Activated CD8-positive, alpha-beta T cell treated with anti-CD3 and anti-CD28 coated beads, Interleukin-2, amount 10 ng/mL, durations not matched to agents 7 days and 5 days (primary cell): ENCODE measurements at regions of chr22 and their contacts with region 1.

Region 1: GRCh38 chr22:17785185-17786184 is 11.2 kb upstream of the BID start:
- DNase-seq: peak; percentile 78
- ATAC-seq: peak; percentile 66
- H3K4me3 Mint-ChIP-seq: no peak overlapping the region
- H3K27ac Mint-ChIP-seq: no peak overlapping the region
- H3K4me1 Mint-ChIP-seq: peaks cover 17% of the 10 kb centered on the region
- H3K27me3 Mint-ChIP-seq: no peaks in the 10 kb centered on the region

Region 2: GRCh38 chr22:17734187-17734586 is 51.3 kb before region 1 on chr22:
- CTCF ChIA-PET with region 1: interaction called, 106 read pairs
- POLR2A ChIA-PET with region 1: no interaction called
- DNase-seq: peak; percentile 56
- ATAC-seq: peak; percentile 75
- H3K4me3 Mint-ChIP-seq: no peak overlapping the region
- H3K27ac Mint-ChIP-seq: peak overlapping the region; percentile 69
- H3K4me1 Mint-ChIP-seq: peaks cover 16% of the 10 kb centered on the region
- H3K27me3 Mint-ChIP-seq: no peaks in the 10 kb centered on the region

Region 3: DNA sequence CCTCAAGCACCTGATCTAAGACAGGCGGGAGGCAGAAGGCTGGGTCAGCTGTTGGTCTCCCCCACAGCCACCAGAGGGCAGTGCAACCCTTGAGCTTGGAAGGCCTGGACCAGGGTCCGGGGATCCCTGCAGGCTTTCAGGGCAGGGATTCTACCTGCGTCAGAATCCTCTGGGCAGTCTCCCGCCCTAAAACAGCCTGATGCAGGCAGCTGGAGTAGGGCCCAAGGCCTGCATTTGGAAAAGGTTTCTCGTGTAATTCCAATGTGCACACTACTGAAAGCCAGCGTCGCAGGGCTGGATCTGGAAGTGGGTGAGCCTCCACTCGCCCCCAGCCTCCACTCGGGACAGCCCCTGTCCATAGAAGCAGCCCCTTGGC is 43.0 kb before region 1 on chr22:
- CTCF ChIA-PET with region 1: interaction called, 106 read pairs
- POLR2A ChIA-PET with region 1: interaction called, 6 read pairs
- DNase-seq: peak; percentile 73
- ATAC-seq: peak; percentile 75
- H3K4me3 Mint-ChIP-seq: no peak overlapping the region
- H3K27ac Mint-ChIP-seq: no peak overlapping the region
- H3K4me1 Mint-ChIP-seq: no peaks in the 10 kb centered on the region
- H3K27me3 Mint-ChIP-seq: no peaks in the 10 kb centered on the region

Region 4: GRCh38 chr22:17754233-17754925 is 31.1 kb before region 1 on chr22:
- CTCF ChIA-PET with region 1: interaction called, 15 read pairs
- POLR2A ChIA-PET with region 1: no interaction called
- DNase-seq: no peak
- ATAC-seq: peak; percentile 51
- H3K4me3 Mint-ChIP-seq: no peak overlapping the region
- H3K27ac Mint-ChIP-seq: no peak overlapping the region
- H3K4me1 Mint-ChIP-seq: no peaks in the 10 kb centered on the region
- H3K27me3 Mint-ChIP-seq: no peaks in the 10 kb centered on the region

Region 5: DNA sequence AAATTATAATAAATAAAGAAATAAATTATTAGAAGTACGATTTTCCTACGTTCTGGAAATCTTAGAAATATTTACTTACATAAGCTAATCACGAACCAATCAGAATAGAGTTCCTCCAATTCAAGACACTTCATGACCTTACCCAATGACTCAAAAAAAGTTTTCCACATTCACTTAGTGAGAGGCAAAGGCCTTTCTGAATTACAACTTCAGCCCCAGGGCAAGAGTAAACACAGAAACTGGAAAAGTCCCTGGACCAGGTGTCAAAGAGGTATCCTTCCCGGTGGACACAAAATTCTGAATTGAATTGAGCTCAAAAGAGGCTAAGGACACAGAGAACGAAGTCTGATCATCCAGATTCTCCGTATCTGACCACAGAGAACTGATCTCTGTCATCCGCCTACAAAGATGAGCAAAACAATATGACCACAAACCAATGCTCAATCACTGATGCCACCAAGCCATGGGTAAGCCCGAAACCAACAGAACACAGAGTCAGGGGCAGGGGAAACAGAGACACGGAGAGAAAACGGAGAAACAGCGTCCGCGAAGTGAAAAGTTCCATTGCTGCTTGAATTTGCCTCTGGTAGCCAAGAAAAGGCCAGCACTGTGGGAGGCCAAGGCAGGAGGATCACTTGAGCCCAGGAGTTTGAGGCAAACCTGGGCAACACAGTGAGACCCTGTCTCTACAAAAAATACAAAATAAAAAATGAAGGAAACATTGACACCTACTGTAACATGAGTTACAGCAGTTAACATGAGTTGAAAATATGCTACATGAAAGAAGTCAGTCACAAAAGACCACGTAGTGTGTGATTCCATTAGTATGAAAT is 18.0 kb before region 1 on chr22:
- CTCF ChIA-PET with region 1: interaction called, 41 read pairs
- POLR2A ChIA-PET with region 1: interaction called, 3 read pairs
- DNase-seq: peak; percentile 75
- ATAC-seq: peak; percentile 86
- H3K4me3 Mint-ChIP-seq: peak overlapping the region; percentile 53
- H3K27ac Mint-ChIP-seq: peak overlapping the region; percentile 64
- H3K4me1 Mint-ChIP-seq: peaks cover 35% of the 10 kb centered on the region
- H3K27me3 Mint-ChIP-seq: peaks cover 18% of the 10 kb centered on the region

Region 6: DNA sequence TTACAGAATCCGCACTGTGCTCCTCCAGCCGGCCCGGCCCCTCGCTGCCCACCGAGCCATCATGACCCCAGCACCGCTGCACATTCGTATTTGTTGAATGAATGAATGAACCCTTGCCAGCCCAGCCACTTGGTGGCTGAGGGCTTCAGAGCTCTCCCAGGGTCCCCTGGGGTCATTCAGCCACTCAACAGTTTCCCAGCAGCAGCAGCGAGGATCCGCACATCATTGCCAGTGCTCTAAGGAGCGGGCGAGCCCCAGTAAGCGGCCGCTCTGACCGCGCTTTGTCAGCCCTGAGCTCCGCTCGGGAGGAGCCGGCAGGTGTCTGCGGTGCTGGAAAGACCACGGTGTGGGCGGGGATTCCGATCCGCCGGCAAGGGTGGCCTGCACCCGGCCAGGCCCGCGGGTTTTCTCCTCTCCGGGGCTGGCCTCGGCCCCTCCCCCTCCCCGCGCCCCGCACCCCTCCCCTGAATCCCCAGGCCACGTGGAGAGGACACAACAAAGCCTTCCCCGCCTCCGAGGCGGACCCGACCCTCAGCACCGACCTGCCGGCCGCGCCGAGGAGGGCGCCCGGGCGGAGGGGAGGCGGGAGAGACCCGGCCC is 11.8 kb before region 1 on chr22:
- CTCF ChIA-PET with region 1: interaction called, 41 read pairs
- POLR2A ChIA-PET with region 1: interaction called, 5 read pairs
- DNase-seq: peak; percentile 76
- ATAC-seq: peak; percentile 62
- H3K4me3 Mint-ChIP-seq: peak overlapping the region; percentile 82
- H3K27ac Mint-ChIP-seq: peak overlapping the region; percentile 76
- H3K4me1 Mint-ChIP-seq: peaks cover 59% of the 10 kb centered on the region
- H3K27me3 Mint-ChIP-seq: peaks cover 7% of the 10 kb centered on the region

Region 7: GRCh38 chr22:18077639-18078328 is 292.3 kb after region 1 on chr22 and contains the start of gene PEX26:
- CTCF ChIA-PET with region 1: interaction called, 12 read pairs
- POLR2A ChIA-PET with region 1: interaction called, 3 read pairs
- DNase-seq: peak; percentile 98
- ATAC-seq: peak; percentile 99
- H3K4me3 Mint-ChIP-seq: peak within 1 kb of the TSS; percentile 96
- H3K27ac Mint-ChIP-seq: peak within 1 kb of the TSS; percentile 98
- H3K4me1 Mint-ChIP-seq: peaks cover 45% of the 10 kb centered on the region
- H3K27me3 Mint-ChIP-seq: no peaks in the 10 kb centered on the region
- total RNA-seq, gene PEX26: 44.4 TPM